ENCODE measurements at regions of chr3 and their contacts with region 1.

Region 1: DNA sequence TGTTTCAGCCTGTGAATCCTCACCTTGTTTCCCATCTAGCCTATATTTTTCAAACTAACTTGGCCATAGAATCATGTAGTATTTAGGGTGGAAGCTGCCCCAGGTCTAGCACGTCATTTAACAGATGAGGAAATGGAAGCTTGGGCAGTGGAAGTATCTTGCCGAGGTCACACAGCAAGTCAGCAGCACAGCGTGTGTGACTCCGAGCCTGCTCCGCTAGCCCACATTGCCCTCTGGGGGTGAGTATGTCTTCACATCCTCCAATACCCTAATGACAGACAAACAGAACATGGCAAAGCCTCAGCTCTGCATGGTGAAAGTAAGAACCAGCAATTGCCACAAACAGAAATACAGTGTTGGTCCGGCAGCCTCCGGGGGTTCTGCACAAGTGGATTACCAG is 2.2 kb upstream of the CCR5 start:
- DNase-seq: peak; percentile 82
- ATAC-seq: peak; percentile 68

Region 2: DNA sequence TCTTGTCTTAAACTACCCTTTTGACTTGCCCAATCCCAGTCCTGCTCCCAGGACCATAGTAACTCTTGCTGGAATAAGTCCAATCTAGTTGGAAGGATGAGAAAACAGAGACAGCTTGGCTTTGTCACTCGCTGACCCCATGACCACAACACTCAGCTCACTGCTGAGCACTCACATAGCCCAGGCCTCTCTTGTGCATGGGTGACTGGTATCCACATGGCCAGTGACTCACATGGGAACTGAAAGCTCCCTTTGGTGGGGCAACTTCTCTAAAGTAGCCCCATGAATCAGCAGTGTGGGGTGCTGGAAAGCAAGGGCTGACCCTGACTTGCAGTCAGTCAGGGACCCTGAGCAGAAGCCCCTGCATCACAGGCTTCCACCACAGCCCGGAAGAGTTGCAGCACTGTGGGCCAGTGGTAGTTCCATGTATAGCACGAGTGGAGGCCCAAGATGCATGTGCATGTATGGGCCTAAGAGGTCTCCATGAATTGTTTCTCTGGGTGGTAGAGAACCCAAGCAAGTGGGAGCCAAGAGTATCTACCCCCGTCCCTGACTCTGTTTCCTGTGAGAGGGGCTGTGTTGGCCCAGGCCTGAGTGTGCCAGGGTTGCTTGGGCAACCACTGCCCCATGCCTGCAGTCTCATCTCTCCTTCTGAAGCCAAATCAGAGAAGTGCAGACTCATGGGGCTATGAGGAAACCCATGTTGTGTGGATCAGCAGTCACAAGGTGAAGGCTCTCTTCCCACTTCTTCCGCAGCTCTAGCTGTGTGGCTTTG is 279.1 kb before region 1 on chr3:
- intact Hi-C with region 1: loop called (anchors 5 kb)
- DNase-seq: peak; percentile 83
- ATAC-seq: peak; percentile 90